ENCODE measurements at regions of chr6 and their contacts with region 1.

Region 1: DNA sequence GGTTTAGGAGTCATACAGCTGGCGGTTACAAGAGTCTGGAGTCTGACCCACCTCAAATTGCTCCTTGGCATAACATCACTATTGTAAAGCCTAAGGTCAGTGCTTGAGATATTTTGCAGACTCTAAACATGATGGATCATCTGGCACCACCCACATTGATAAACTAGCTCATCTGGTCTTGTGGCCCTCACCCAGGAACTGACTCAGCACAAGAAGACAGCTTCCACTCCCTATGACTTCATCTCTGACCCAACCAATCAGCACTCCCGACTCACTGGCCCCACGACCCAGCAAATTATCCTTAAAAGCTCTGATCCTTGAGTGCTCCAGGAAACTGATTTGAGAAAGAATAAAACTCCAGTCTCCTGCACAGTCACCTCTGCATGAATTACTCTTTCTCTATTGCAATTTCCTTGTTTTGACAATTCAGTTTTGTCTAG is 115.9 kb downstream of the CD24 start:
- DNase-seq: no peak
- ATAC-seq: no peak

Region 2: DNA sequence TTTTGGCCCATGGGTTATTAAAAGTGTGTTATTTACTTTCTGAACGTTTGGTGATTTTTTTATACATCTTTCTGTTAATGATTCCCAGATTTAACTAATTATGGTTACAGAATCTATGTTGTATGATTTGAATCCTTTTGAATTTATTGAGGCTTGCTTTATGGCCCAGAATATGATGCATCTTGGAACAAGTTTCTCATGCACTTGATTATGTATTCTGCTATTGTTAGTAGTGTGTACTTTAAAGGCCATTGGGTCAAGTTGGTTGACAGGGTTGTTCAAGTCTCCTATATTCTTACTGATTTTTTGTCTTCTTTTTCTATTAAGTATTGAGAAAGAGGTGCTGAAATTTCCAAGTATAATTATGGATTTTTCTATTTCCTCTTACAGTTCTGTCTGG is 1597.0 kb after region 1 on chr6:
- intact Hi-C with region 1: loop called (anchors 5 kb)
- DNase-seq: no peak
- ATAC-seq: no peak

Measured in sciatic nerve (tissue), 2 donors.